Posterior vena cava (tissue), 2 donors: ENCODE measurements at regions of chr11 and their contacts with region 1.

Region 1: GRCh38 chr11:127825183-127825582 is 762.2 kb downstream of the ETS1 start:
- DNase-seq: no peak

Region 2: GRCh38 chr11:128389461-128389976 is 564.3 kb after region 1 on chr11:
- intact Hi-C with region 1: loop called in 1 of 2 experiments (anchors 5 kb)
- DNase-seq: no peak